Naive thymus-derived CD4-positive, alpha-beta T cell (primary cell): ENCODE measurements at regions of chr13 and their contacts with region 1.

Region 1: GRCh38 chr13:111066544-111066943 is 48.6 kb upstream of the ARHGEF7 start:
- DNase-seq: no peak
- ATAC-seq: no peak
- H3K4me3 ChIP-seq: no peak overlapping the region
- H3K4me3 Mint-ChIP-seq: peak overlapping the region; percentile 31 to 88 (median 75)
- H3K27ac ChIP-seq: no peak overlapping the region
- H3K27ac Mint-ChIP-seq: peak overlapping the region in 1 of 9 donors; percentile 31
- H3K4me1 ChIP-seq: no peaks in the 10 kb centered on the region
- H3K4me1 Mint-ChIP-seq: peaks cover 3 to 9% (median 9%) of the 10 kb centered on the region in 7 donors
- H3K27me3 ChIP-seq: no peaks in the 10 kb centered on the region
- H3K27me3 Mint-ChIP-seq: peaks cover 60 to 70% (median 61%) of the 10 kb centered on the region in 5 donors

Region 2: DNA sequence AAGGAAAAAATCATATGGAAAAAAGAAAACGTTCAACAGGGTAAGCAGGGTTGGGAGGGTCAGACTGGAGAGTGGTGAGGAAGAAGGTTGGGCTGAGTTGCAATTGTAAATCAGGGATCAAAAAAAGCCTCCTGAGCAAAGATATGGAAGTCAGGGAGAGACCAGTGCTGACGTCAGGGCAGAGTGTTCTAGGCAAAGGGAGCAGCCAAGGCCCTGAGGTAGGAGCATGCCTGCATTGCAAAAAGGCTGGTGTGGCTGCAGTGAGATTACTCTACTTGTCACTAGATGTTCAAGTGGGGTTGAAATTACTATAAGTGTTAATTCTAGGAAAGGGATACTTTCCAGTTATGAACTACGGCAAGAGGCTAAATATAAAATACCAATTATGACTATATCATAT is 1875.1 kb before region 1 on chr13:
- CTCF ChIA-PET with region 1: no interaction called
- POLR2A ChIA-PET with region 1: no interaction called
- intact Hi-C with region 1: no loop called
- DNase-seq: no peak
- ATAC-seq: no peak
- H3K4me3 ChIP-seq: no peak overlapping the region
- H3K4me3 Mint-ChIP-seq: no peak overlapping the region
- H3K27ac ChIP-seq: no peak overlapping the region
- H3K27ac Mint-ChIP-seq: no peak overlapping the region
- H3K4me1 ChIP-seq: no peaks in the 10 kb centered on the region
- H3K4me1 Mint-ChIP-seq: no peaks in the 10 kb centered on the region
- H3K27me3 ChIP-seq: no peaks in the 10 kb centered on the region
- H3K27me3 Mint-ChIP-seq: peaks cover 0 to 32% (median 29%) of the 10 kb centered on the region in 5 donors

Region 3: DNA sequence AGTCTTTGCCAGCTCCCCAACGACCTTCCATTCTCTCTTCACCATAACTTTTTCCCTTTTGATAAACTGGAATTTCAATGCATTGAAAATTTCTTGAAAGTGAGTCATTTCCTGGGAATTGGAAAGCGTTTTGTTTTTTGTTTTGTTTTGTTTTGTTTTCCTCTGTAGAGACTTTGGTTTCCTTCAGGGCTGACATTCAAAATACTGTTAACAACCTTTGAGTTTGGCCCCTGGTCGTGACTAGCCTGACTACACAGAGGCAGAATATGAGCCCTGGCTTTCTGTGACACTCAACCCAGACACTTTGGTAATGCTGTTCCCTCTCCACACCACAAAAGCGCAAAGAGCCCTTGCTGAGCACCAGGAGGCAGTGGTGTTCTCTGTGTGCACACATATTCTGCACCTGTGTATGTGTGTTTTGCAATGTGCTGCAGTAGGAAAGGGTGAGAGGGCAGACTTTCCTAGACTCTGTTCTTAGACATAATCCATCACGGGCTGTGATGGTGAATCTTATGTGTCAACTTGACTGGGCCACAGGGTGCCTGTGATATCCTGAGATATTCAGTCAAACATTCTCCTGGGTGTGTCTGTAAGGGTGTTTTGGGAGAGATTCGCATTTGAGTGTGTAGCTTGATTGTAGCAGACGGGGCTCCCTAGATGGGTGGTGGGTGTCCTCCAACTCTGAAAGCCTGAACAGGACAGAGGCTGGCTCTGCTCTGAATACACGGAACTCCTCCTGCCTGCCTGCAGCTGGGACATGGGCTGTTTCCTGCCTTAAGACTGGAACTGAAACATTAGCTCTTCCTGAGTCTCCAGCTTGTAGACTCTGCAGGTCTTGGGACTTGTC is 122.2 kb before region 1 on chr13:
- CTCF ChIA-PET with region 1: no interaction called
- POLR2A ChIA-PET with region 1: no interaction called
- intact Hi-C with region 1: loop called in 1 of 2 experiments (anchors 1 kb)
- DNase-seq: peak in 3 of 9 donors; percentile 3 to 37 (median 10)
- ATAC-seq: peak; percentile 33
- H3K4me3 ChIP-seq: no peak overlapping the region
- H3K4me3 Mint-ChIP-seq: no peak overlapping the region
- H3K27ac ChIP-seq: no peak overlapping the region
- H3K27ac Mint-ChIP-seq: no peak overlapping the region
- H3K4me1 ChIP-seq: no peaks in the 10 kb centered on the region
- H3K4me1 Mint-ChIP-seq: peaks cover 0 to 22% (median 0%) of the 10 kb centered on the region in 7 donors
- H3K27me3 ChIP-seq: no peaks in the 10 kb centered on the region
- H3K27me3 Mint-ChIP-seq: peaks cover 0 to 3% (median 0%) of the 10 kb centered on the region in 5 donors

Region 4: DNA sequence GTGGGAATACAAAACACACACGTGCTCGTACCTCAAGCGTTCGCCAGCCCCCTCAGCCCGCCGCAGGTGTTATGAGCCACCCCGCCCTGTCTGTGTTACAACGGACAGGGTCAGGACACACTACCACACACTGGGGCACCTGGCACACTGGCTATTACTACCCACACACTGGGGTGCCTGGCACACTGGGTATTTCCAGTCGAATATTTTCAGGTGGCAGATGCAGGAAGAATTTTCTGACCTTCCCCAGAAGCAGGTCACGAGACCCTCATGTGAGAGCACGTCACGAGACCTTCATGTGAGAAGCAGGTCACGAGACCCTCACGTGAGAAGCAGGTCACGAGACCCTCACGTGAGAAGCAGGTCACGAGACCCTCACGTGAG is 14.8 kb before region 1 on chr13:
- CTCF ChIA-PET with region 1: no interaction called
- POLR2A ChIA-PET with region 1: no interaction called
- intact Hi-C with region 1: no loop called
- DNase-seq: no peak
- ATAC-seq: no peak
- H3K4me3 ChIP-seq: no peak overlapping the region
- H3K4me3 Mint-ChIP-seq: no peak overlapping the region
- H3K27ac ChIP-seq: no peak overlapping the region
- H3K27ac Mint-ChIP-seq: no peak overlapping the region
- H3K4me1 ChIP-seq: no peaks in the 10 kb centered on the region
- H3K4me1 Mint-ChIP-seq: peaks cover 0 to 9% (median 0%) of the 10 kb centered on the region in 7 donors
- H3K27me3 ChIP-seq: no peaks in the 10 kb centered on the region
- H3K27me3 Mint-ChIP-seq: peaks cover 8 to 33% (median 20%) of the 10 kb centered on the region in 5 donors

Region 5: DNA sequence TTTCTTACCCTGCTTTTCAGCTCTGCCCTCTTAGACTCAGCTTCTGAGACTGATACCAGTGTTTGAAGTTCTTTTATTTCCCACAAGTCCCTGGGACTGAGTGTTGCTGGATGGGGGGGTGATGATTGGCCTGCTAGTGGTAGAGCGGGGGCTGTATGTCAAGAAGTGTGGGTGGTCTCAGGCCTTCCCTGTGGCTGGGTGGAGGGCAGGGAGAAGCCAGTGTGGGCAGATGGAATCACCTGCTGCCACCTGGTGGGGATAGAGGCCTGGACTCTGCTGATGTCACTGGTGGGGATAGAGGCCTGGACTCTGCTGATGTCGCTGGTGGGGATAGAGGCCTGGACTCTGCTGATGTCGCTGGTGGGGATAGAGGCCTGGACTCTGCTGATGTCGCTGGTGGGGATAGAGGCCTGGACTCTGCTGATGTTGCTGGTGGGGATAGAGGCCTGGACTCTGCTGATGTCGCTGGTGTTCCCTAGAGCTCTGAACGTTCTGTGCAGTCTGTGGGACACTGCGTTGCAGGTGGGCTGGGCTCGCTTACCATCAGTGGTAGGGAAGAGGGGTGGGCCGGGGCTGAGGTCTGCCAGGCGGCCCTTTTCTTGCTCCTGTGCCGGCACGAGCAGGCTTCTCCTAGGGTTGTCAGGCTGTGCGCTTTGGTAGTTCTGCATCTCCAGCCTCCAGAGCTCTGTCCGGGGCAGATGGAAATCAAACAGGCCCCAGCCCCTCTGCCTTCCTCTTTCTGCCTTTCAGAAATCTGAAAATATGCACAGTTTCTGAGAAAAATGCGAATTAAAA is 149.8 kb after region 1 on chr13:
- CTCF ChIA-PET with region 1: interaction called, 82 read pairs
- POLR2A ChIA-PET with region 1: interaction called, 3 read pairs
- intact Hi-C with region 1: loop called (anchors 1 kb)
- DNase-seq: peak in 8 of 9 donors; percentile 18 to 49 (median 30)
- ATAC-seq: peak; percentile 72
- H3K4me3 ChIP-seq: no peak overlapping the region
- H3K4me3 Mint-ChIP-seq: no peak overlapping the region
- H3K27ac ChIP-seq: no peak overlapping the region
- H3K27ac Mint-ChIP-seq: peak overlapping the region in 6 of 9 donors; percentile 34 to 88 (median 50)
- H3K4me1 ChIP-seq: no peaks in the 10 kb centered on the region
- H3K4me1 Mint-ChIP-seq: peaks cover 14 to 73% (median 57%) of the 10 kb centered on the region in 7 donors
- H3K27me3 ChIP-seq: no peaks in the 10 kb centered on the region
- H3K27me3 Mint-ChIP-seq: no peaks in the 10 kb centered on the region

Region 6: DNA sequence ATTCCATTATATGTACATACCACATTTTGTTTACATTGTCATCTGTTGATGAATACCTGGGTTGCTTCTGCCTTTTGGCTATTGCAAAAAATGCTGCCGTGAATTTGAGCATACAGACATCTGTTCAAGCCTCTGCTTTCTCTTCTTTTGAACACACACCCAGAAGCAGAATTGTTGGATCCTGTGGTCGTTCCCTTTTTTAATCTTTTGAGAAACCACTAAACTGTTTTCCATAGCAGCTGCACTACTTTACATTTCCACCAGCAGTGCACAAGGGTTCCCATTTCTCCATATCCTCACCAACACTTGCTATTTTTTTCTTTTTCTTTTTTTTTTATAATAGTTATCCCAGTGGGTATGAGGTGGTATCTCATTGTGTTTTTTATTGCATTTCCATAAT is 377.4 kb after region 1 on chr13:
- CTCF ChIA-PET with region 1: no interaction called
- POLR2A ChIA-PET with region 1: no interaction called
- intact Hi-C with region 1: loop called in 1 of 2 experiments (anchors 5 kb)
- DNase-seq: no peak
- ATAC-seq: no peak
- H3K4me3 ChIP-seq: no peak overlapping the region
- H3K4me3 Mint-ChIP-seq: no peak overlapping the region
- H3K27ac ChIP-seq: no peak overlapping the region
- H3K27ac Mint-ChIP-seq: no peak overlapping the region
- H3K4me1 ChIP-seq: no peaks in the 10 kb centered on the region
- H3K4me1 Mint-ChIP-seq: peaks cover 0 to 7% (median 4%) of the 10 kb centered on the region in 7 donors
- H3K27me3 ChIP-seq: no peaks in the 10 kb centered on the region
- H3K27me3 Mint-ChIP-seq: peaks cover 8 to 28% (median 18%) of the 10 kb centered on the region in 5 donors

Region 7: GRCh38 chr13:111973605-111974340 is 907.2 kb after region 1 on chr13:
- CTCF ChIA-PET with region 1: no interaction called
- POLR2A ChIA-PET with region 1: no interaction called
- intact Hi-C with region 1: no loop called
- DNase-seq: no peak
- ATAC-seq: no peak
- H3K4me3 ChIP-seq: no peak overlapping the region
- H3K4me3 Mint-ChIP-seq: no peak overlapping the region
- H3K27ac ChIP-seq: no peak overlapping the region
- H3K27ac Mint-ChIP-seq: no peak overlapping the region
- H3K4me1 ChIP-seq: no peaks in the 10 kb centered on the region
- H3K4me1 Mint-ChIP-seq: peaks cover 0 to 5% (median 0%) of the 10 kb centered on the region in 7 donors
- H3K27me3 ChIP-seq: no peaks in the 10 kb centered on the region
- H3K27me3 Mint-ChIP-seq: peaks cover 8 to 57% (median 31%) of the 10 kb centered on the region in 5 donors

Region 8: GRCh38 chr13:112606109-112607001 is 1539.8 kb after region 1 on chr13:
- CTCF ChIA-PET with region 1: no interaction called
- POLR2A ChIA-PET with region 1: no interaction called
- intact Hi-C with region 1: loop called in 1 of 2 experiments (anchors 5 kb)
- DNase-seq: peak; percentile 65 to 95 (median 77)
- ATAC-seq: peak; percentile 100
- H3K4me3 ChIP-seq: peak overlapping the region; percentile 51
- H3K4me3 Mint-ChIP-seq: peak overlapping the region; percentile 76 to 89 (median 86)
- H3K27ac ChIP-seq: no peak overlapping the region
- H3K27ac Mint-ChIP-seq: peak overlapping the region in 5 of 9 donors; percentile 3 to 43 (median 19)
- H3K4me1 ChIP-seq: no peaks in the 10 kb centered on the region
- H3K4me1 Mint-ChIP-seq: peaks cover 4 to 12% (median 10%) of the 10 kb centered on the region in 7 donors
- H3K27me3 ChIP-seq: no peaks in the 10 kb centered on the region
- H3K27me3 Mint-ChIP-seq: peaks cover 5 to 54% (median 23%) of the 10 kb centered on the region in 5 donors